PC-3 (cell line): ENCODE measurements at regions of chr13 and their contacts with region 1.

Region 1: DNA sequence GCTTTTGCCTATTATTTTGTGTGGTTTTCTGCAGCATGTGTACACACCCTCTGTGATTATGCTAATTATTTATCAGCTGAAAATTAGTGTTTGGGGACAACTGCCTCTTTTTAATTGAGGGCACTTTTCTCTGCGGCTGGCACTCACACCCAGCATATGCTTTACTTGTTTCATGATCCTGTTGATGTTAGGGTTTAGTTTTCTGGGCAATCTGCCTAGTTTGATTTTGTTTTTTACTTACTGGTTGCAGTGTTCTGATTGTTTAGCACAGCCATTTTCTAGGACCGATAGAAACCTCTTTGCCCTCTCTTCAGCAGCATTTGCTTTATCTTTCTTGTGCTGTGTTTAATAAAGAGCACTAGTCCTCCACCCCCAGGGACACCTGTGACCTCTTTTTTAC is 161.6 kb downstream of the PAN3 start:
- DNase-seq: no peak
- ATAC-seq: no peak
- H3K4me3 ChIP-seq: no peak overlapping the region
- H3K27ac ChIP-seq: no peak overlapping the region
- H3K4me1 ChIP-seq: no peaks in the 10 kb centered on the region
- H3K27me3 ChIP-seq: no peaks in the 10 kb centered on the region
- CTCF ChIP-seq: no peak

Region 2: DNA sequence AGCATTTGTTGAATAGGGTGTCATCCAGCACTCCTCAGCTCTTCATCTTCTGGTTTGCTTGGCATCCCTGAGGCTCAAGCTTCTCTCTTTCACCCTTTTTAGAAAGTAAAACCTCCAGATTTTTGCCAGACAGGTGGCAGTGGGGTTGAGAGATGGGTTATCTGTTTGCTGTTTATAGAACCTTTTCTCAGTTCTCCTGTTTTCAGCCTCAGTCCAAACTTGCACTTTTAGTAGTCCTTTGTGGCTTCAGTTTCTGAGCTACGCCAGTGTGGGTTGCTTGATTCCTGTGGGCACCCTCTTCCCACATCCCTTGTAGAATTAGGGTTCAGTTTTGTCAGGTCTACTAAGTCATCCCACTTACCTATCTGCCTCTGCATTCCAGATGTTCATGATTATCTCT is 13.7 kb before region 1 on chr13:
- CTCF ChIA-PET with region 1: no interaction called
- POLR2A ChIA-PET with region 1: no interaction called
- intact Hi-C with region 1: loop called (anchors 2 kb)
- DNase-seq: no peak
- ATAC-seq: no peak
- H3K4me3 ChIP-seq: no peak overlapping the region
- H3K27ac ChIP-seq: no peak overlapping the region
- H3K4me1 ChIP-seq: no peaks in the 10 kb centered on the region
- H3K27me3 ChIP-seq: no peaks in the 10 kb centered on the region
- CTCF ChIP-seq: no peak

Region 3: GRCh38 chr13:28337166-28338005 is 37.5 kb after region 1 on chr13:
- CTCF ChIA-PET with region 1: no interaction called
- POLR2A ChIA-PET with region 1: no interaction called
- intact Hi-C with region 1: no loop called
- DNase-seq: peak; percentile 54
- ATAC-seq: no peak; the same call in 1 of the 2 replicates
- H3K4me3 ChIP-seq: no peak overlapping the region
- H3K27ac ChIP-seq: 0 out of 2 replicates have a peak overlapping the region, but pooled peaks have one; percentile 2
- H3K4me1 ChIP-seq: peaks cover 22% of the 10 kb centered on the region
- H3K27me3 ChIP-seq: peaks cover 7% of the 10 kb centered on the region; the same call in 1 of the 2 replicates
- CTCF ChIP-seq: no peak